ENCODE measurements at regions of chr9 and their contacts with region 1.

Region 1: GRCh38 chr9:34332076-34332964 is 3.0 kb downstream of the NUDT2 start:
- DNase-seq: no peak
- H3K4me3 Mint-ChIP-seq: no peak overlapping the region
- H3K27ac Mint-ChIP-seq: no peak overlapping the region
- H3K4me1 Mint-ChIP-seq: peaks cover 14% of the 10 kb centered on the region
- H3K27me3 Mint-ChIP-seq: no peaks in the 10 kb centered on the region
- CTCF ChIP-seq: no peak

Region 2: GRCh38 chr9:34346873-34347799 is 14.8 kb after region 1 on chr9:
- CTCF ChIA-PET with region 1: interaction called, 11 read pairs
- intact Hi-C with region 1: no loop called
- DNase-seq: no peak
- H3K4me3 Mint-ChIP-seq: no peak overlapping the region
- H3K27ac Mint-ChIP-seq: no peak overlapping the region
- H3K4me1 Mint-ChIP-seq: no peaks in the 10 kb centered on the region
- H3K27me3 Mint-ChIP-seq: no peaks in the 10 kb centered on the region
- CTCF ChIP-seq: no peak

Region 3: DNA sequence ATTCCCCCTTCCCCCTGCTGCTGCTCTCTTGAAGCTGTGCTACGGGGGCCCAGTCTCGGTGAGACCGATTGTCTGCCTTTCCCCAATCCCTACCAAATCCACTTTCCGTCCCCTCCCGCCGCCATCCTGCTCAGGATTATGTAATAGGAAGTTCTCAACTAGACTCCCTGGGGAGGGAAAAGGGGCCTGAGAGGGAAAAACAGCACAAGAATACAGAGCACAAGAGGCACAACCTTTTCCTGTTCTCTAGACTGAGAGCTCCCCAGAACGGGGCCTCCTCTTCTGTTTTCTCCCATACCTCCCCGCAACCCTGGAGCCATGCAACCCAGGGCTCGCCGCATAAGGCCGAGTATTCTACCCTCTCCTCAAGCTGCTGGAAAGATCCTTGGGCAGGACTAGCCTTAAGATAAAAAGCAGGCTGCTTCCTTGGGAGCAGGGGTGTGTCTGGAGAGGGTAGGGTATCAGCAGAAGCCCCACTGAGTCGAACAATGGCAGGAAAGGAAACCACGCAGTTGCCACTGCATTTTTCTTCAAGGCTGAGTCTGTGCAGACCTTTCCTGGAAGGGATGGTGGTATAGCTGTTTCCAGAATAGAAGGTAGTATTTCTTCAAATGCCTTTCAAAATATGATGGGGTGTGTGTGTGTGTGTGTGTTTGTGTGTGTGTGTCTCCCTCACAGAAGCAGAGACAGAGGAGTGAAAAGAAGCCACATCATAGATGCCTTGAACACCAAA is 31.5 kb after region 1 on chr9:
- CTCF ChIA-PET with region 1: no interaction called
- intact Hi-C with region 1: no loop called
- DNase-seq: no peak
- H3K4me3 Mint-ChIP-seq: no peak overlapping the region
- H3K27ac Mint-ChIP-seq: no peak overlapping the region
- H3K4me1 Mint-ChIP-seq: no peaks in the 10 kb centered on the region
- H3K27me3 Mint-ChIP-seq: no peaks in the 10 kb centered on the region
- CTCF ChIP-seq: no peak

Region 4: GRCh38 chr9:34379334-34380033 is 47.2 kb after region 1 on chr9:
- CTCF ChIA-PET with region 1: interaction called, 5 read pairs
- intact Hi-C with region 1: loop called (anchors 2 kb)
- DNase-seq: peak; percentile 85
- H3K4me3 Mint-ChIP-seq: peak overlapping the region; percentile 56
- H3K27ac Mint-ChIP-seq: no peak overlapping the region
- H3K4me1 Mint-ChIP-seq: peaks cover 32% of the 10 kb centered on the region
- H3K27me3 Mint-ChIP-seq: peaks cover 44% of the 10 kb centered on the region
- CTCF ChIP-seq: peak; percentile 89

Measured in Calu3 (cell line).